A549 (cell line): ENCODE measurements at regions of chr19 and their contacts with region 1.

Region 1: GRCh38 chr19:18521885-18522624 is at the start of gene ELL:
- DNase-seq: peak; percentile 88 to 100
- ATAC-seq: peak; percentile 88 to 91
- H3K4me3 ChIP-seq: peak within 1 kb of the TSS; percentile 100
- H3K27ac ChIP-seq: peak within 1 kb of the TSS; percentile 96 to 97
- H3K4me1 ChIP-seq: peaks cover 9% of the 10 kb centered on the region
- CTCF ChIP-seq: no peak
- EP300 ChIP-seq: no peak
- POLR2A ChIP-seq: peak; percentile 89
- RAD21 ChIP-seq: no peak
- polyA plus RNA-seq, gene ELL: 1.1 and 1.6 TPM in 2 replicates

Region 2: DNA sequence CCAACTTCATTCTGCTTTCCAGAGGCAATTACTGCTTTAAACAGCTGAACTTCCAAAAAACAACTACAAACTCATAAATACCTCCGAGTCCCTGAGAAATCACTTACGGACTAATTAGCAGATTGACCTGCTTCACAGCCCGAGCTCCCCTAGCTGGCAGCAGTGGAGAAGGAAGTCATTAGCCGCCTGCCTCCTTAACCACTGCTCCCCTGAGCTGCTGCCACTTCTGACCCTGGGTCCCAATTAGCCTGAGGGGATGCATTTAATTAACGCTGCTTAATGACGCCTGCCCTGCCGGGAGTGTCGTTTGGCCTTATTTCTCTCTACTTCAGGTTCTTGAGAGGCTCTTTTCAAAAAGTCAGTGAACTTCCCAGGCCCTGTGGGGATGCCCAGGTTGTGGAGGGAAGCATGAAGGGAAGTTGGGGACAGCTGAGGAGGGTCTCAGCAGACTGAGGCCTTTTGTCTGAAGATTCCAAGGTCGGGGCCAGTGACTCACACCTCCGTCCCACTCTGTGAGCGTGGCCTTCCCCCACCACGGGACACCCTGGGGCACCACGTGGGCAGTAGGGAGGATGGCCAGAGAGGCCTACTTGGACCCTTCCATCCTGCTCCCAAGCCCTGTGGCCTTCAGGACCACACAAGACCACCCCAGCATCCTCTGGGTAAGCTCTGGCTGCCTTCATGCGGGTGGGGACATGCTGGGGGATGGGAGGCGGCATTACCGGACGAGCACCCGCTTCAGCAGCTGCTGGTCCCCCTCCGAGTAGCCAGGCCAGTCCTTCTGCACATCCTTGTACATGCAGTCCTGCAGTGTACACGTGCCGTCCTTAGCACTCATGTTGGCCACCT is 64.3 kb before region 1 on chr19:
- CTCF ChIA-PET with region 1: interaction called, 11 read pairs
- POLR2A ChIA-PET with region 1: no interaction called
- DNase-seq: no peak
- ATAC-seq: no peak
- H3K4me3 ChIP-seq: no peak overlapping the region
- H3K27ac ChIP-seq: no peak overlapping the region
- H3K4me1 ChIP-seq: peaks cover 24% of the 10 kb centered on the region
- CTCF ChIP-seq: no peak
- EP300 ChIP-seq: no peak
- POLR2A ChIP-seq: no peak
- RAD21 ChIP-seq: no peak

Region 3: GRCh38 chr19:18488838-18489626 is 33.0 kb before region 1 on chr19:
- CTCF ChIA-PET with region 1: interaction called, 19 read pairs
- POLR2A ChIA-PET with region 1: interaction called, 3 read pairs
- DNase-seq: peak; percentile 45 to 57
- ATAC-seq: peak; percentile 50 to 69; a peak in 4 of 6 replicates
- H3K4me3 ChIP-seq: no peak overlapping the region
- H3K27ac ChIP-seq: peak overlapping the region in 1 of 2 experiments; percentile 53; a peak in 1 of 6 replicates
- H3K4me1 ChIP-seq: peaks cover 29% of the 10 kb centered on the region
- CTCF ChIP-seq: no peak
- EP300 ChIP-seq: no peak
- POLR2A ChIP-seq: no peak
- RAD21 ChIP-seq: peak; percentile 28 to 36; a peak in 3 of 5 replicates

Region 4: GRCh38 chr19:18503971-18504885 is 17.8 kb before region 1 on chr19:
- CTCF ChIA-PET with region 1: interaction called, 25 read pairs
- POLR2A ChIA-PET with region 1: no interaction called
- DNase-seq: peak in 1 of 2 experiments; percentile 58
- ATAC-seq: peak; percentile 36 to 78; a peak in 4 of 6 replicates
- H3K4me3 ChIP-seq: no peak overlapping the region
- H3K27ac ChIP-seq: peak overlapping the region in 1 of 2 experiments; percentile 51; a peak in 2 of 6 replicates
- H3K4me1 ChIP-seq: peaks cover 35% of the 10 kb centered on the region
- CTCF ChIP-seq: no peak
- EP300 ChIP-seq: no peak
- POLR2A ChIP-seq: no peak
- RAD21 ChIP-seq: no peak

Region 5: GRCh38 chr19:18700501-18701249 is 178.6 kb after region 1 on chr19:
- CTCF ChIA-PET with region 1: no interaction called
- POLR2A ChIA-PET with region 1: no interaction called
- DNase-seq: no peak
- ATAC-seq: no peak
- H3K4me3 ChIP-seq: no peak overlapping the region
- H3K27ac ChIP-seq: no peak overlapping the region
- H3K4me1 ChIP-seq: no peaks in the 10 kb centered on the region
- CTCF ChIP-seq: no peak
- EP300 ChIP-seq: no peak
- POLR2A ChIP-seq: no peak
- RAD21 ChIP-seq: no peak